ENCODE measurements at regions of chr17 and their contacts with region 1.

Region 1: GRCh38 chr17:72715906-72716572 is 376.4 kb downstream of the SLC39A11 start:
- DNase-seq: peak; percentile 82 to 98
- H3K4me3 ChIP-seq: peak overlapping the region; percentile 47; the same call in 1 of the 2 replicates
- H3K27ac ChIP-seq: peak overlapping the region; percentile 97
- H3K4me1 ChIP-seq: peaks cover 55% of the 10 kb centered on the region
- H3K27me3 ChIP-seq: no peaks in the 10 kb centered on the region
- CTCF ChIP-seq: no peak

Region 2: DNA sequence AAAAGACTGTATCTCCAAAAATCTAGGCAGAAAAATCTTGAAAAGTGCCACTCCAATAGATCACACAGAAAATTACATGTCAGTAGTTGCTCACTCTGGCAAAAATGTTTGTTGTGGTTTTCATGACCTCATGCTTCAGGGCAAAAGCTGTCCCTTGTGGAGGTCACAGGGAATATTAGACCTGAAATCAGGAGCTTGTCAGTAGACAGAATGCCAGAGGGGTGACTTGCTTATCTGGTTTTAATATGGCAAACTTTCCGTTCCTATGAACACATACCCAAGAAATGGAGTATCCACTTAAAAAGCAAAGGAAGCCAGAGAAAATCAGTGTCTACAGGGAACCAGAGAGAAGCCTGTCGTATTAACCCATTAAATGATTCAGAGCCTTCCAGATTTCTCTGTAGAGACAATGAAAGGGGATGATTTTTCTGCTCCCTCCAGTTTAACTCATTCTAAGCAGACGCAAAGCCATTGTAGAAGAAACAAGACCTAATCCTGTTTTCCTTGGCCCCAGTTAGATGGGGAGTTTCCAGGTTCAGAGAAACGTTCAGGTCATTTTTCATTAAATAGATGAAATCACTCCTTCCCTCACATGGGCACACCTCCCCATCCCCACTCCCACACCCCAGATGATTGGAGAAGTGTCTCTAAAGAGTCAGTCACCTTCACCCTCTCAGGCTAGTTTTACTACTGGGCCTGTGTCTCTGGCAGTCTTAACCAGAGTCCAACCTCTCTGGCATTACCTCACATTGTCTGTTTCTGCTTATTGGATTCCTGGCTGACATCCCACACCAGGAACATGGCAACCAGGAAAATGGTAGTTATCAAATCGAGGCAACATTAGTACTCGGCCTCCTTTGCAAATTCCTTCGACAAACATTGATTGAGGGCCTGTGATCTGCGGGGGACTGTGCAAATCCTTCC is 589.2 kb before region 1 on chr17:
- CTCF ChIA-PET with region 1: no interaction called
- POLR2A ChIA-PET with region 1: interaction called, 20 read pairs
- intact Hi-C with region 1: loop called (anchors 5 kb)
- DNase-seq: peak; percentile 60 to 97
- H3K4me3 ChIP-seq: peak overlapping the region; percentile 55; the same call in 1 of the 2 replicates
- H3K27ac ChIP-seq: peak overlapping the region; percentile 74
- H3K4me1 ChIP-seq: peaks cover 45% of the 10 kb centered on the region
- H3K27me3 ChIP-seq: no peaks in the 10 kb centered on the region
- CTCF ChIP-seq: 0 out of 2 replicates have a peak, but pooled peaks have one; percentile 6

Region 3: DNA sequence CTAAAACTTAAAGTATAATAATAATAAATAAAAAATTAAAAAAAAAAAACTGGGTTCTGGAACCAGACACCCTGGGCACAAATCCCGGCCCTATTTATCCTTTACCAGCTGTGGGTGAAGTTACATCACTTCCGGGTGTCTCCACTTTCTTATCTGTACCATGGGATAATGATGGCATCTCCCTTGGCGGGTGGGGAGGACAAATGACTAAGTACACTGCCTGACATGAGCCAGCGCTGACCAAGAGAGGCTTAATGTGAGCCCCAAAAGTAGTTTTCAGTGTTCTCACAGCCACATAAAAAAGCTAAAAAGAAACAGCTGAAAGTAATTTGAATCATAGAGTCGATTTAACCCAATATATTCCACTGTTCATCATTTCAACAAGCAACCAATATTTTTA is 170.3 kb before region 1 on chr17:
- CTCF ChIA-PET with region 1: no interaction called
- POLR2A ChIA-PET with region 1: interaction called, 12 read pairs
- intact Hi-C with region 1: no loop called
- DNase-seq: no peak
- H3K4me3 ChIP-seq: no peak overlapping the region
- H3K27ac ChIP-seq: no peak overlapping the region
- H3K4me1 ChIP-seq: no peaks in the 10 kb centered on the region
- H3K27me3 ChIP-seq: no peaks in the 10 kb centered on the region
- CTCF ChIP-seq: no peak

Region 4: GRCh38 chr17:72592242-72592966 is 123.6 kb before region 1 on chr17:
- CTCF ChIA-PET with region 1: no interaction called
- POLR2A ChIA-PET with region 1: interaction called, 10 read pairs
- intact Hi-C with region 1: loop called (anchors 2 kb)
- DNase-seq: peak; percentile 67 to 86
- H3K4me3 ChIP-seq: peak overlapping the region; percentile 97
- H3K27ac ChIP-seq: peak overlapping the region; percentile 86; the same call in 1 of the 2 replicates
- H3K4me1 ChIP-seq: peaks cover 24% of the 10 kb centered on the region
- H3K27me3 ChIP-seq: no peaks in the 10 kb centered on the region
- CTCF ChIP-seq: no peak

Region 5: DNA sequence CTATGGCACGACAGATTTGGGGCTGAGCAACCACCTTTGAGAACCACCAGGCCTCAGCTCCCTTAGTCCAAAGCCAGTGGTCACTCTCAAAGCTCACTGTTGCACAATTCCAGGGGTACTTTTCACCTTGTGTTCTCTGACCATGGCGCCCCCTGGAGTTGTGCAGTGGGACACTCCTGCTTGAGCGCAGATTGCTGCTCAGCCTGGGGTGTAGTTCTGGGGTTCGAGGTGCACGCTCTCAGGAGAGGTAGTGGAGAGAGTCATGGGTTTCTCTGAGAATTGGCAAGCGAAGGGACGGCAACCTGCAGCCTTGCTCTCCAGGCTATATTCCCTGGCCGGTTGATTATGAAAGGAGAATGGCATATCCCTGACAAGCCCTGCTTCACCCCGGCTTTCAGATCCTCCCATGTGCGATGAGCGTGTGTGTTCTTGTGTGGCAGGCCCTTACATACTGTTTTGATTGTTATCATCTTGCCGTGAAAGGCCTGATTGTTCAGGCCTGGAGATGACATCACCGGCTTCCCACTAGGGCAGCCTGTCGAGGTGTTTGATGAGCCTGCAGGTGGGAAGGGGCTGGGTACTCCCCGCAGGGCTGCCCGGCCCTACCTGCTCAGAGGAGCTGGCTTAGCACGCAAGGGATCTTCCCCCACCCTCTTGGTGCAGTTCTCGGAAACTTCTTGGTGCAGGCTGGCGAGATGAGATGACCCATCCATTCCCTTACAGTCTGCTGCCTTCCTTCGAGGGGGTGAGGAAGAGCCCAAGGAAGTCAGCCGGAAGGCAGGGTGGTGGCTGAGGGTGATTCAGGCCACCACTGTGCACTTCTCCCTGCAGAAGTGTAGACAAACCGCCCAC is 54.7 kb before region 1 on chr17:
- CTCF ChIA-PET with region 1: interaction called, 3 read pairs
- POLR2A ChIA-PET with region 1: interaction called, 7 read pairs
- intact Hi-C with region 1: loop called (anchors 1 kb)
- DNase-seq: peak; percentile 90 to 98
- H3K4me3 ChIP-seq: 0 out of 2 replicates have a peak overlapping the region, but pooled peaks have one; percentile 22
- H3K27ac ChIP-seq: peak overlapping the region; percentile 92
- H3K4me1 ChIP-seq: peaks cover 44% of the 10 kb centered on the region
- H3K27me3 ChIP-seq: no peaks in the 10 kb centered on the region
- CTCF ChIP-seq: peak; percentile 63

Region 6: GRCh38 chr17:73291260-73291801 is 575.3 kb after region 1 on chr17:
- CTCF ChIA-PET with region 1: no interaction called
- POLR2A ChIA-PET with region 1: no interaction called
- intact Hi-C with region 1: loop called (anchors 1 kb)
- DNase-seq: peak; percentile 92 to 94
- H3K4me3 ChIP-seq: peak overlapping the region; percentile 46; the same call in 1 of the 2 replicates
- H3K27ac ChIP-seq: peak overlapping the region; percentile 99
- H3K4me1 ChIP-seq: peaks cover 91% of the 10 kb centered on the region
- H3K27me3 ChIP-seq: no peaks in the 10 kb centered on the region
- CTCF ChIP-seq: no peak

Measured in PC-9 (cell line).